ENCODE measurements at regions of chr1 and their contacts with region 1.

Region 1: GRCh38 chr1:201970334-201971159 is 11.9 kb upstream of the RNPEP start:
- DNase-seq: no peak
- ATAC-seq: peak in 2 of 4 donors; percentile 36 to 37
- H3K4me3 ChIP-seq: no peak overlapping the region
- H3K27ac ChIP-seq: no peak overlapping the region
- H3K4me1 ChIP-seq: peaks cover 0 to 14% (median 5%) of the 10 kb centered on the region in 12 donors
- H3K27me3 ChIP-seq: no peaks in the 10 kb centered on the region
- CTCF ChIP-seq: no peak
- POLR2A ChIP-seq: no peak

Region 2: GRCh38 chr1:201828820-201829774 is 141.4 kb before region 1 on chr1 and contains the start of gene IPO9:
- intact Hi-C with region 1: loop called in 2 of 10 experiments (anchors 5 kb)
- DNase-seq: peak; percentile 91 to 96 (median 94)
- ATAC-seq: peak; percentile 74 to 92 (median 90)
- H3K4me3 ChIP-seq: peak within 1 kb of the TSS; percentile 70 to 98 (median 88)
- H3K27ac ChIP-seq: peak within 1 kb of the TSS; percentile 73 to 96 (median 92)
- H3K4me1 ChIP-seq: peaks cover 0 to 57% (median 28%) of the 10 kb centered on the region in 12 donors
- H3K27me3 ChIP-seq: no peaks in the 10 kb centered on the region
- CTCF ChIP-seq: peak; percentile 94 to 100 (median 98)
- POLR2A ChIP-seq: peak in 1 of 2 donors; percentile 76
- total RNA-seq, gene IPO9: 12.1 to 35.4 (median 23.1) TPM

Region 3: GRCh38 chr1:201877877-201878401 is 92.6 kb before region 1 on chr1:
- intact Hi-C with region 1: loop called in 7 of 10 experiments (anchors 1 to 5 kb)
- DNase-seq: peak in 1 of 5 donors; percentile 29
- ATAC-seq: peak; percentile 33 to 77 (median 62)
- H3K4me3 ChIP-seq: no peak overlapping the region
- H3K27ac ChIP-seq: peak overlapping the region in 9 of 12 donors; percentile 12 to 65 (median 33)
- H3K4me1 ChIP-seq: peaks cover 0 to 19% (median 6%) of the 10 kb centered on the region in 12 donors
- H3K27me3 ChIP-seq: no peaks in the 10 kb centered on the region
- CTCF ChIP-seq: peak; percentile 48 to 72 (median 59)
- POLR2A ChIP-seq: no peak

Region 4: DNA sequence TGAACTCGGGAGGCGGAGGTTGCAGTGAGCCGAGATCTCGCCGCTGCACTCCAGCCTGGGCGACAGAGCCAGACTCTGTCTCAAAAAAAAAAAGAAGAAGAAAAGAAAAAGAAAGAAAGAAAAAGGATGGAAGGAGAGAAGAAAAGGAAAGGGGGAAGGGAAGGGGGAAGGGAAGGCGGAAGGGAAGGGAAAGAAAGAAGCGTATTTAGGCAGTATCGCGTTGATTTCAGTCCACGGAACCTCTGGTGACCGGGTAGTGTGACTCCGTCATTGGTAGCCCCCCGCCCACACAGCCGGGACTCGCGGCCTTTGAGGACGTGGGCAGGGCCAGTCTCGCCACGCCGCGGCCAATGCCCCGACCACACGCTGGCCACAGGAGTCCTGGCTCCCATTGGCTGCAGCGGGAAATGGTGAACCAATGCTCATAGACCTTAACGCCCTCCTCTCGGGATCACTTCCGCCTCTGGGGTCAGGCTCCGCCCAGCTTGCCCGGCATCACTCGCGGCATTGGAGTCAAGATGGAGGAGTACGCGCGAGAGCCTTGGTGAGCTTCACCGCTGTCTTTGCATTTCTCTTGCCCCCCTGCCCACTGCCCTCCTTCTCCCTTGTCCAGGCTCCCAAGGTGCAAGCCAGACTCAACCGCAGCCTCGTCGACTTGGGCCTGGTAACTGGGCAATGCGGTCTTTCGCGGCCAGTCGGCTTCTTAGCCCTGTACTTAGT is 15.4 kb before region 1 on chr1 and contains the start of gene TIMM17A:
- intact Hi-C with region 1: no loop called
- DNase-seq: peak; percentile 96 to 98 (median 97)
- ATAC-seq: peak; percentile 100
- H3K4me3 ChIP-seq: peak within 1 kb of the TSS; percentile 64 to 95 (median 78)
- H3K27ac ChIP-seq: peak within 1 kb of the TSS; percentile 68 to 91 (median 81)
- H3K4me1 ChIP-seq: peaks cover 0 to 20% (median 11%) of the 10 kb centered on the region in 12 donors
- H3K27me3 ChIP-seq: no peaks in the 10 kb centered on the region
- CTCF ChIP-seq: peak in 1 of 12 donors; percentile 16
- POLR2A ChIP-seq: peak; percentile 59 to 82
- total RNA-seq, gene TIMM17A: 31.7 to 120 (median 86.0) TPM